Activated CD8-positive, alpha-beta T cell treated with anti-CD3 and anti-CD28 coated beads for 36 hours (primary cell): ENCODE measurements at regions of chr16 and their contacts with region 1.

Region 1: DNA sequence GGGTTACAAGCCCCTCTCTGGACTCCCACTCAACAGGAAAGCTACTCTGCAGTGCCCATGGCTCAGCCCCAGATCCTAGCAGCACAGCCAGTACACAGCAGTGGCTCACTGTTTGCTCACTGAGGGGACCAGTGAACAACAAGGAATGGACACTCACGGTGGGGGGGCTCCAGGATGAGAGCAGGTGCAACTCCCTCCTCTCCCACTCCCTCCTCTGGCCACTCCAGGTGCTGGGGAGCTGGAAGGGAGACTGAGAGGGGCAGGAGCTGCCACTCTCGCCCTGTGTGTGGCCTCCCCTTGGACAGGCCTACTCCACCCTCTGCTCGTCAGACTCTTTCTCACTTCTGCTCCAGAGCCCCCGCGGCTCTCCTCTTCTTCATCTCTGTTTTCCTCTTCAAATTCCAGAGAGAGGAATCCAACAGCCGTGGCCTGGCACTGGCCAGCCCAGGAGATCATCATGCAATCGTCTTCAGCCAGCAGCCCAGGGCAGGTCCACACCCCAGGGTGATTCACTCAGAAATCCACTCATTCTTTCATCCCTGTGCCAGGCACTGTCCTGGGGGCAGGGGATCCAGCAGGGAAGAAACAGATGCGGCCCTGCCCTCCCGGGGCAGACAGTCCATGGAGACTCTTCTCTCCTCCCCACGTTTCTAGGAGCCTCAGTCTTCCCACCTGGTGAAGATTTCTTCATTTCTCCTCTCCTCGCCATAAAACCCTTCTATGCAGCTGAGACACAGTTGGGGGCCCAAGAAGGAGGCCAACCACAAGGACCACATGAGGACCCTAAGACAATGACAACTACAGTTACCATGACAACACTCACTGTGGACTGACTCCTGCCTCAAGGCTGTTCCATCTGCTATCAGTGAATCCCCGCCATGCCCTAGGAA is 30.7 kb downstream of the CFAP20 start:
- DNase-seq: no peak
- ATAC-seq: no peak
- H3K4me3 Mint-ChIP-seq: no peak overlapping the region
- H3K27ac Mint-ChIP-seq: no peak overlapping the region
- H3K4me1 Mint-ChIP-seq: no peaks in the 10 kb centered on the region
- H3K27me3 Mint-ChIP-seq: peaks cover 2% of the 10 kb centered on the region
- CTCF ChIP-seq: no peak

Region 2: DNA sequence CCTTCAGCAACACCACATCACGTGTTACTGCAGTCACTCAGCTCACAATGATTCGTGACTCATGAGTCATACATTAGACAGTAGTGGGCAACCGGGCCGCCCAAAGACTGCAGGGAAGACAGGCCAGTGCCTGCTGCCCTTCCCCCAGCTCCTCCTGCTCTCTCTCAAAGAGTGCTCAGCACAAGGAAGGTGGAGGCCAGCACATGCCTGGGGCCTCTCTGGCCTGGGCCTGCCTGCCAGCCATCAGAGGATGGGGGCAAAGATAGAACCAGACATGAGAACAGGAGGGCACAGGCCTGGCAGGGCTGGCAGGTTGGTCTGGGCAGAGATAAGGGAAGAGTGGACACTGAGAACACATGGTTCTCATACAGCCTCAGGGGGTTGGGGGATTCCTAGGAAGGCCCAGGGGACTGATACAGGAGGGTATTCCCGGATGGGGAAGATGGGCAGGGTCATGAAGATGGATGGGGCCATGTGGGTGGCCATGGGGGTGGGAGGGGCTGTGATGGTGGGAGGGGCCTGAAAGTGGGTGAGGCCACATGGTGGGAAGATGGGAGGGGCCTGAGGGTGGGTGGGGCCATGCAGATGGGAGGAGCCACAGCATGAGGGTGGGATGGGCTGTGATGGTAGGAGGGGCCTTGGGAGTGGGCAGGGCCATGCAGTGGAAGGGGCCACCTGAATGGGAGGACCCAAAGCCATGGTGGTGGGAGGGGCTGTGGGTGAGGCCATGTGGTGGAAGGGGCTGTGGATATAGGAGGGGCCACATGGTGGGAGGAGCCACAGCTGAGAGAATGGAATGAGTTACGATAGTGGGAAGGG is 333.9 kb before region 1 on chr16:
- CTCF ChIA-PET with region 1: no interaction called
- POLR2A ChIA-PET with region 1: no interaction called
- intact Hi-C with region 1: no loop called
- DNase-seq: peak; percentile 56
- ATAC-seq: peak; percentile 92
- H3K4me3 Mint-ChIP-seq: no peak overlapping the region
- H3K27ac Mint-ChIP-seq: no peak overlapping the region
- H3K4me1 Mint-ChIP-seq: no peaks in the 10 kb centered on the region
- H3K27me3 Mint-ChIP-seq: no peaks in the 10 kb centered on the region
- CTCF ChIP-seq: no peak

Region 3: DNA sequence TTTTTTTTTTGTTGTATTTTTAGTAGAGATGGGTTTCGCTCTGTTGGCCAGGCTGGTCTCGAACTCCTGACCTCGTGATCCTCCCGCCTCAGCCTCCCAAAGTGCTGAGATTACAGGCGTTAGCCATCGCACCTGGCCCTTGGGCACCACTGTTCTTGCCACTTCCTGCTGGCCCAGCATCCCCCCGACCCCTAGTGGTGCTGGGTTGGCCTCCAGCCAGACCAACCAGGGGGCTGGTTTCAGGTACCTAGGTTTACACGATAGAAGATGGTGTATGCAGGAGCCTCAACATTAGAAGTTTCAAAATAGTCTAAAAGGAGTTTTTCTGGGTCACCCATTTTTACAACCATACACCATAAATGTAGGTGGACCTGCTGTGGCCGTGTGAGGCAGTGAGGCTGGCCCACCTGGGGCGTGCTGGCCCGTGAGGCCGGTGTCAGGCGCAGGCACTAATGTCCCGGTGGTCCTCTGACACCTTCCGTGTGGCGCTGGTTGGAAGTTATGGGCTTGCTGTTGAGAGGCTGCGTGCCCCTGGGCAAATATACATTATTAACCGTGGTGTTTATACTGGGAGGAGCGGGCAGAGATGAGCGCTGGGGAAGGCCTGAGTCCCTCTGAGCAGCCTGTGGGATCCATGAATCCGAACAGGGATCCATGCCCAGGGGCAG is 12.7 kb before region 1 on chr16:
- CTCF ChIA-PET with region 1: interaction called, 13 read pairs
- POLR2A ChIA-PET with region 1: interaction called, 3 read pairs
- intact Hi-C with region 1: no loop called
- DNase-seq: no peak
- ATAC-seq: no peak
- H3K4me3 Mint-ChIP-seq: no peak overlapping the region
- H3K27ac Mint-ChIP-seq: no peak overlapping the region
- H3K4me1 Mint-ChIP-seq: no peaks in the 10 kb centered on the region
- H3K27me3 Mint-ChIP-seq: peaks cover 1% of the 10 kb centered on the region
- CTCF ChIP-seq: no peak

Region 4: GRCh38 chr16:58109330-58109729 is 10.9 kb after region 1 on chr16:
- CTCF ChIA-PET with region 1: interaction called, 21 read pairs
- POLR2A ChIA-PET with region 1: interaction called, 3 read pairs
- intact Hi-C with region 1: no loop called
- DNase-seq: no peak
- ATAC-seq: no peak
- H3K4me3 Mint-ChIP-seq: no peak overlapping the region
- H3K27ac Mint-ChIP-seq: no peak overlapping the region
- H3K4me1 Mint-ChIP-seq: no peaks in the 10 kb centered on the region
- H3K27me3 Mint-ChIP-seq: no peaks in the 10 kb centered on the region
- CTCF ChIP-seq: no peak

Region 5: GRCh38 chr16:58119509-58119845 is 21.0 kb after region 1 on chr16:
- CTCF ChIA-PET with region 1: interaction called, 30 read pairs
- POLR2A ChIA-PET with region 1: no interaction called
- intact Hi-C with region 1: no loop called
- DNase-seq: no peak
- ATAC-seq: no peak
- H3K4me3 Mint-ChIP-seq: no peak overlapping the region
- H3K27ac Mint-ChIP-seq: no peak overlapping the region
- H3K4me1 Mint-ChIP-seq: peaks cover 39% of the 10 kb centered on the region
- H3K27me3 Mint-ChIP-seq: no peaks in the 10 kb centered on the region
- CTCF ChIP-seq: no peak

Region 6: GRCh38 chr16:58129097-58129936 is 30.9 kb after region 1 on chr16 and contains the start of gene CFAP20:
- CTCF ChIA-PET with region 1: interaction called, 30 read pairs
- POLR2A ChIA-PET with region 1: no interaction called
- intact Hi-C with region 1: no loop called
- DNase-seq: peak; percentile 99
- ATAC-seq: peak; percentile 96
- H3K4me3 Mint-ChIP-seq: peak within 1 kb of the TSS; percentile 90
- H3K27ac Mint-ChIP-seq: peak within 1 kb of the TSS; percentile 96
- H3K4me1 Mint-ChIP-seq: peaks cover 39% of the 10 kb centered on the region
- H3K27me3 Mint-ChIP-seq: no peaks in the 10 kb centered on the region
- CTCF ChIP-seq: no peak
- total RNA-seq, gene CFAP20: 36.5 to 40.4 TPM

Region 7: DNA sequence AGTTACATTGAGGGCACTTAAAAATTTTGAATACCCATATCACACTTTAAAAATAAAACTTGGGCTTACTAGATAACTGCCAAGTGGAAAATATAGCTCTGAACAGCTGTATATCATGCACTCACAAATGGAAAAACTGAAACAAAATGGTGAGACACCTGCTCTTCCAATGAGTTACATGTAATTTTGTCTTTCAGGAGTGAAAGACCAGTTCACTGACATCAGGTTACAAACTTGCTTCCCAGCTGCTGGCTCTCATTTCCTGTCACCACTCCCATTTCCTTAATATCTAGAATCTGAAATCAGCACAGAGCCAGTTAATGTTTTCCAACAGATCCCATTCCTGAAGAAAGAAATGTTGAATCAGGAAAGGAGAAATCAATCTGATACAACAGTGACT is 88.6 kb after region 1 on chr16:
- CTCF ChIA-PET with region 1: no interaction called
- POLR2A ChIA-PET with region 1: no interaction called
- intact Hi-C with region 1: no loop called
- DNase-seq: no peak
- ATAC-seq: no peak
- H3K4me3 Mint-ChIP-seq: no peak overlapping the region
- H3K27ac Mint-ChIP-seq: peak overlapping the region; percentile 67
- H3K4me1 Mint-ChIP-seq: peaks cover 36% of the 10 kb centered on the region
- H3K27me3 Mint-ChIP-seq: no peaks in the 10 kb centered on the region
- CTCF ChIP-seq: no peak

Region 8: DNA sequence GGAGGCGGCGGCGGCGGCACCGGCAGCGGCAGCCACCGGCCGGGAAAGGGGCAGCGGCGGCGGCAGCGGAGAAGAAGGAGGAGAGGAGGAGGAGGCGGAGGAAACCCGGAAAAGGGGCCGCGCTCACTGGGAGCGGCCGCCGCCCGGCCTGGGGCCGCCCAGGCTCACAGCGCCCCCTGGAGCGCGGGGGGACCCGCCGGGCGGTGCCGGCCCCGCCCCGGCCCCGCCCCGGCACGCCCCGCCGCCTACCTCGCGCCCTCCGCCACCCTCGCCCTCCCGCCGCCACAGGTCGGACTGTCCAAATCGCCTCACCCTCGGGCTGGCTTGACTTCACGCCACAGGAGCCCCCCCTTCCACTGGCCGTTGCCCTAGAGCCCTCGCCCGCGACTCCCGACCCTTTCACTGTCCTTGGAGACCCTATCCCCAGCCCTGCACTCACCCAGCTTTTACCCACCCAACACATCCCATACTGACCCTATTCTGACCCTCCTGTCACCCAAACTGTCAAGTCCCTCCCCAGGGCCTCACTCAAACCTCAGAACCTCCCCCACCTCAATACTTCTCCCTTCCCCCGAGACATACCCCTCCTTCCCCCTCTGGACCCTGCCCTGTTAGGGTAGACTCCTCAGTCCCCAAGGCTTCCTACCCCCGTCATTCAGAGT is 99.7 kb after region 1 on chr16 and contains the start of gene CSNK2A2:
- CTCF ChIA-PET with region 1: no interaction called
- POLR2A ChIA-PET with region 1: no interaction called
- intact Hi-C with region 1: no loop called
- DNase-seq: peak; percentile 67
- ATAC-seq: peak; percentile 94
- H3K4me3 Mint-ChIP-seq: peak within 1 kb of the TSS; percentile 96
- H3K27ac Mint-ChIP-seq: peak within 1 kb of the TSS; percentile 80
- H3K4me1 Mint-ChIP-seq: peaks cover 40% of the 10 kb centered on the region
- H3K27me3 Mint-ChIP-seq: peaks cover 7% of the 10 kb centered on the region
- CTCF ChIP-seq: peak; percentile 11
- total RNA-seq, gene CSNK2A2: 97.5 to 99.0 TPM